ENCODE measurements at regions of chr17 and their contacts with region 1.

Region 1: GRCh38 chr17:51097708-51098446 is 22.8 kb downstream of the SPAG9 start:
- DNase-seq: peak in 1 of 9 experiments; percentile 41
- ATAC-seq: peak; percentile 11
- H3K4me3 ChIP-seq: no peak overlapping the region
- H3K4me3 Mint-ChIP-seq: no peak overlapping the region
- H3K27ac ChIP-seq: no peak overlapping the region
- H3K27ac Mint-ChIP-seq: no peak overlapping the region
- H3K4me1 ChIP-seq: peaks cover 14% of the 10 kb centered on the region
- H3K4me1 Mint-ChIP-seq: peaks cover 33% of the 10 kb centered on the region
- H3K27me3 ChIP-seq: no peaks in the 10 kb centered on the region
- H3K27me3 Mint-ChIP-seq: no peaks in the 10 kb centered on the region
- CTCF ChIP-seq: no peak

Region 2: GRCh38 chr17:51064061-51064735 is 33.7 kb before region 1 on chr17:
- CTCF ChIA-PET with region 1: no interaction called
- POLR2A ChIA-PET with region 1: no interaction called
- intact Hi-C with region 1: loop called in 1 of 2 experiments (anchors 1 kb)
- DNase-seq: no peak
- ATAC-seq: no peak
- H3K4me3 ChIP-seq: no peak overlapping the region
- H3K4me3 Mint-ChIP-seq: no peak overlapping the region
- H3K27ac ChIP-seq: no peak overlapping the region
- H3K27ac Mint-ChIP-seq: no peak overlapping the region
- H3K4me1 ChIP-seq: peaks cover 4% of the 10 kb centered on the region
- H3K4me1 Mint-ChIP-seq: peaks cover 29% of the 10 kb centered on the region
- H3K27me3 ChIP-seq: no peaks in the 10 kb centered on the region
- H3K27me3 Mint-ChIP-seq: no peaks in the 10 kb centered on the region
- CTCF ChIP-seq: no peak

Region 3: GRCh38 chr17:51120739-51121617 is 23.1 kb after region 1 on chr17 and contains the start of gene SPAG9:
- CTCF ChIA-PET with region 1: interaction called, 3 read pairs
- POLR2A ChIA-PET with region 1: no interaction called
- intact Hi-C with region 1: loop called in 1 of 2 experiments (anchors 2 kb)
- DNase-seq: peak; percentile 79 to 96 (median 88)
- ATAC-seq: peak; percentile 84
- H3K4me3 ChIP-seq: peak within 1 kb of the TSS; percentile 96
- H3K4me3 Mint-ChIP-seq: peak within 1 kb of the TSS; percentile 94
- H3K27ac ChIP-seq: peak within 1 kb of the TSS; percentile 95
- H3K27ac Mint-ChIP-seq: peak within 1 kb of the TSS; percentile 98
- H3K4me1 ChIP-seq: peaks cover 38% of the 10 kb centered on the region
- H3K4me1 Mint-ChIP-seq: peaks cover 49% of the 10 kb centered on the region
- H3K27me3 ChIP-seq: no peaks in the 10 kb centered on the region
- H3K27me3 Mint-ChIP-seq: no peaks in the 10 kb centered on the region
- CTCF ChIP-seq: no peak
- total RNA-seq, gene SPAG9: 75.7 to 77.6 TPM

Measured in CD8-positive, alpha-beta T cell (primary cell).